WTC11 (cell line): ENCODE measurements at regions of chr2 and their contacts with region 1.

Region 1: DNA sequence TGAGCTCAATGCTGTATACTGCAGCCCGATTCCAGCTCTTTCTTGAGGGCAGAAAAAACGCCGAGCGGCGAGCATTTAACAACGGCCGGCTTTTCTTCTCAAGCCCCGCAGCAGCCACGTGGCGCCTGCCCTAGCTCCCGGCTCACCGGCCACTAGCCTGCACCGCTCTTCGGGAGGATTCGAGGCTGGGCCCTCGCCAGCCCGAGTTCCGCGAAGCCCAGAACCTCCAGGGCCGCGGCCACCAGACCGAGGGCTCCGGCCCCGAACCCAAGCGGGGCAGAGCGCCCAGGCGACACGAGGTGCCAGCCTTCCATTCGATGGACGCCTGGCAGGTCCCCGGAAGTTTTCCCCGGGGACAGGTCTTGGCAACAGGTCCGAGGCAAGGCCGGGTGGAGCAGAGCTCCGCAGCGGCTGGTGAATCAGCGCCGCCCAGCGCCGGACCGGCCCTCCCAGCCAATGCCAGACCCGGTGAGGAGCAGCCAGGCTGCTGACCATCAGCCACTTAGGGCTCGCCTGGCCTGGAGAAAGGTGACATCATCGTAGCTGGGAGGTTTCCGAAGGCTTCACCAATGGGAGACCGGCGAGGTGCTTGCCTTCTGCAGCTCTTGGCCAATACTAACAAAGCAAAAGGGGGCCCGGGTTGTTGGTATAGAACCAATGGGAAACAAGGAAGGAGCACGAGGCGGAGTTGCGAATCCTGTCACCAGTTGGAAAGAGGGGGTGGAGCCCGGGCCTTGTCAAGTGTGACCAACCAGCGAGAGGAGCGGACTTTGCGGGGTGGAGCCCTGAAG is 544 bp upstream of the MXD1 start:
- DNase-seq: peak; percentile 100
- ATAC-seq: peak; percentile 93
- H3K4me3 Mint-ChIP-seq: peak overlapping the region; percentile 71
- H3K27ac Mint-ChIP-seq: peak overlapping the region; percentile 70
- H3K4me1 Mint-ChIP-seq: peaks cover 4% of the 10 kb centered on the region; the same call in 1 of the 2 replicates
- H3K27me3 Mint-ChIP-seq: no peaks in the 10 kb centered on the region
- CTCF ChIP-seq: no peak

Region 2: GRCh38 chr2:69893684-69894551 is 20.4 kb before region 1 on chr2 and contains the start of gene SNRNP27:
- CTCF ChIA-PET with region 1: interaction called, 16 read pairs
- POLR2A ChIA-PET with region 1: interaction called, 11 read pairs
- DNase-seq: peak; percentile 75
- ATAC-seq: peak; percentile 89
- H3K4me3 Mint-ChIP-seq: peak within 1 kb of the TSS; percentile 98
- H3K27ac Mint-ChIP-seq: peak within 1 kb of the TSS; percentile 96
- H3K4me1 Mint-ChIP-seq: no peaks in the 10 kb centered on the region
- H3K27me3 Mint-ChIP-seq: no peaks in the 10 kb centered on the region
- CTCF ChIP-seq: no peak
- total RNA-seq, gene SNRNP27: 38.4 to 45.9 TPM (median 39.9 TPM) in 3 replicates

Region 3: DNA sequence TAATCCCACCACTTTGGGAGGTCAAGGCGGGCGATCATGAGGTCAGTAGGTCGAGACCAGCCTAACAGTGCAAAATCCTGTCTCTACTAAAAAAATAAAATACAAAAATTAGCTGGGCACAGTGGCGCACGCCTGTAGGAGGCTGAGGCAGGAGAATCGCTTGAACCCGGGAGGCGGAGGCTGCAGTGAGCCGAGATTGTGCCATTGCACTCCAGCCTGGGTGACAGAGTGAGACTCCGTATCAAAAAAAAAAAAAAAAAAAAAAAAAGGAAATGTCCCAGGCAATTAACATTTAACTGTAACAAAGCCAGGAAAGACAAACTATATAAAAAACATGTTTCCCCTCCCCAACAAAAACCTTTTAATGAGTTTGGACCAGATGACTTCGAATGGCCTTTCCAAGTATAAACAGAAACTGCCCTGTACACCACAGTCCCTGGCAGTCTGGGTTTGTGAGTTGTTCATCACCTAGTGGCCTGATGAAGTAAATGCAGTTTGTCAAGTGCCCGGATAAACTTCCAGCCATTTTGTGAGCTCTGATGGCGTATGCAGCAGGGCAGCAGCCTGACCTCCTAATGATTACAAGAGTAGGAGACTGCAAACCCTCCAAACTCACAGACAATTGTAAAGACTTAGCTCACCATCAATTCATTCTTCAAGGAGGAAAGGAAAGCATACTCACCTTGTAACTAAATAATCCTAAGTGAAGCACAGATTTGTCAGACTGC is 156.3 kb after region 1 on chr2:
- CTCF ChIA-PET with region 1: interaction called, 32 read pairs
- POLR2A ChIA-PET with region 1: interaction called, 15 read pairs
- DNase-seq: peak; percentile 47
- ATAC-seq: peak; percentile 97
- H3K4me3 Mint-ChIP-seq: no peak overlapping the region
- H3K27ac Mint-ChIP-seq: peak overlapping the region; percentile 100
- H3K4me1 Mint-ChIP-seq: peaks cover 4% of the 10 kb centered on the region
- H3K27me3 Mint-ChIP-seq: no peaks in the 10 kb centered on the region
- CTCF ChIP-seq: peak; percentile 53

Region 4: GRCh38 chr2:70124983-70125480 is 210.7 kb after region 1 on chr2:
- CTCF ChIA-PET with region 1: interaction called, 7 read pairs
- POLR2A ChIA-PET with region 1: interaction called, 29 read pairs
- DNase-seq: peak; percentile 61
- ATAC-seq: peak; percentile 49
- H3K4me3 Mint-ChIP-seq: peak overlapping the region; percentile 97
- H3K27ac Mint-ChIP-seq: peak overlapping the region; percentile 100
- H3K4me1 Mint-ChIP-seq: peaks cover 51% of the 10 kb centered on the region
- H3K27me3 Mint-ChIP-seq: no peaks in the 10 kb centered on the region; the same call in 1 of the 2 replicates
- CTCF ChIP-seq: no peak

Region 5: DNA sequence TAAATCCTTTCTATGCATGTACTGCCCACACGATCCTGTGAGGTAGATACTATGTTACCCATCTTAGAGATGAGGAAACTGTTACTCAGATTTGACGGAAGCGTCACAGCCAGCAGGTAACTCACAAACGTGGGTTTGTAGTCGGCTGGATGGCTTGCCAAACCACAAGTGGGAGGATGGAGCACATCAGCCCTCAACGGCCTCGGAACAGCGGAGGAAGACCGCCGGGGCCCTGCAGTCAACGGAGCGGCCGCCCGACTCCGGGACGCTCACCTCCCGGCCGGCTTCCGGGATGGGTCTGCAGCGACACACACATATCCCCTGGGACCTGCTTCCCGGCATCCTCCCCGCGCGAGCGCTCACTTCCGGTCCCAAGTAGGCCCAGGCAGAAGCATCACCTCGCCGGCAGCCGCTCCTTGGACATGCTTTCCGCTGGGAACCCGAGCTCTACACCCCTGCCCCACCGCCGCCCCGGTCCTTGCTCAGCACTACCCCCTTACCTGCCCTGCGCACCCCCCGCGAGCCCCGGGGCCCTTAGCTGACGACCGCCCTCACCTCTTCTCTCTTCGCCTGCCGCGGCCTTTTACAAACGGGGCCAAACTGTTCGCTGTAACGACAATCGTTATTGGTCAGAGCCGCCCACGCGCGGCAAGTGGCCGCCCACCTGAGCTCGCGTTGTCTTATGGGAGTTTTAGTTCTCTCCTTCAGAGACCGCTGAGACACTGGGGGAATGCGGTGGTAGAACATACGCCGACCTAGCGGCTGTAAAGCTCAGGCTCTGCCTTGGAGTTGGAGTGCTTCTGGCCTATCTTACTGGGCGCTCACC is 276.3 kb after region 1 on chr2 and contains the start of gene C2orf42:
- CTCF ChIA-PET with region 1: interaction called, 12 read pairs
- POLR2A ChIA-PET with region 1: interaction called, 4 read pairs
- DNase-seq: peak; percentile 88
- ATAC-seq: peak; percentile 90
- H3K4me3 Mint-ChIP-seq: peak within 1 kb of the TSS; percentile 85
- H3K27ac Mint-ChIP-seq: peak within 1 kb of the TSS; percentile 97
- H3K4me1 Mint-ChIP-seq: peaks cover 14% of the 10 kb centered on the region
- H3K27me3 Mint-ChIP-seq: no peaks in the 10 kb centered on the region; the same call in 1 of the 2 replicates
- CTCF ChIP-seq: no peak
- total RNA-seq, gene C2orf42: 6.8 to 13.1 TPM (median 10.2 TPM) in 3 replicates